Activated T-helper 1 cell treated with anti-CD3 and anti-CD28 coated beads, Interleukin-12 subunit alpha, Interleukin-12 subunit beta, Interleukin-2, Interleukin-4 antibody, amounts not matched to agents 30 ng/mL and 10 ng/mL and 1 ng/mL, durations not matched to agents 14 hours and 24 hours and 36 hours (primary cell): ENCODE measurements at regions of chr20 and their contacts with region 1.

Region 1: GRCh38 chr20:25407311-25408169 is at the start of gene GINS1:
- DNase-seq: peak; percentile 85
- H3K4me3 Mint-ChIP-seq: peak within 1 kb of the TSS; percentile 86
- H3K27ac Mint-ChIP-seq: peak within 1 kb of the TSS; percentile 87
- H3K4me1 Mint-ChIP-seq: peaks cover 27% of the 10 kb centered on the region
- H3K27me3 Mint-ChIP-seq: no peaks in the 10 kb centered on the region
- total RNA-seq, gene GINS1: 39.6 and 40.1 TPM in 2 replicates

Region 2: DNA sequence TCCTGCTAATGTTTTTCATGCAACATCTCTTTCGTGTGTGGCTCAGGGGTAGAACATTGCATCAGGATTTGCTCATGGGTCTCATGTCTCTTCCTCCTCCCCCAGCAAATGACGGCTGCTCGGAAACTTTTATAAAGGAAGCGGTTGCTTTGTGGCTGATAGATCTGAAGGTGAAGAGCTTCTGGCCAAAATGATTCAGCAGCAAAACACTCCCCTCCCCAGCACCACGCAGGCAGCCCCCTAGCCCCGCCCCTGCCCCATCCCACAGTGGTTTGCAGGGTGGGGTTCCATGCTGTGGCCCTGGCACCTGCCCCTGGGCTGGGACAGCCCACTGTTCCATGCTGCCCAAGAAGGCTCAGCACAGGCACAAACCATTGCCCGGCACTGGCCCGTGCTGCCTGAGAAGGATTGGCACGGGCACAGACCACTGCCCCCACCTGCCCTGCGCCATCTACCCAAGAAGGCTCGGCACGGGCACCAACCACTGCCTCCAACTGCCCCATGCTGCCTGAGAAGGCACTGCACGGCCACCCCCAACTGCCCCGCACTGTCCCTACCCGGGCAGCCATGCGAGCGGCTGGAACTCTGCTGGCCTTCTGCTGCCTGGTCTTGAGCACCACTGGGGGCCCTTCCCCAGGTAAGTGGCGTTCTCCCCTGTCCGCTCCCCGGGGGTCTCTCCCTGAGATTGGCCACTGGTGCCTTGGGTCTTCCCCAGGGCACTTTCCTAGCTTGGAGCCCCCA is 458.4 kb before region 1 on chr20 and contains the start of gene CST7:
- intact Hi-C with region 1: loop called (anchors 5 kb)
- DNase-seq: peak; percentile 81
- H3K4me3 Mint-ChIP-seq: peak within 1 kb of the TSS; percentile 90
- H3K27ac Mint-ChIP-seq: peak within 1 kb of the TSS; percentile 99
- H3K4me1 Mint-ChIP-seq: peaks cover 74% of the 10 kb centered on the region
- H3K27me3 Mint-ChIP-seq: no peaks in the 10 kb centered on the region
- total RNA-seq, gene CST7: 127 and 133 TPM in 2 replicates

Region 3: DNA sequence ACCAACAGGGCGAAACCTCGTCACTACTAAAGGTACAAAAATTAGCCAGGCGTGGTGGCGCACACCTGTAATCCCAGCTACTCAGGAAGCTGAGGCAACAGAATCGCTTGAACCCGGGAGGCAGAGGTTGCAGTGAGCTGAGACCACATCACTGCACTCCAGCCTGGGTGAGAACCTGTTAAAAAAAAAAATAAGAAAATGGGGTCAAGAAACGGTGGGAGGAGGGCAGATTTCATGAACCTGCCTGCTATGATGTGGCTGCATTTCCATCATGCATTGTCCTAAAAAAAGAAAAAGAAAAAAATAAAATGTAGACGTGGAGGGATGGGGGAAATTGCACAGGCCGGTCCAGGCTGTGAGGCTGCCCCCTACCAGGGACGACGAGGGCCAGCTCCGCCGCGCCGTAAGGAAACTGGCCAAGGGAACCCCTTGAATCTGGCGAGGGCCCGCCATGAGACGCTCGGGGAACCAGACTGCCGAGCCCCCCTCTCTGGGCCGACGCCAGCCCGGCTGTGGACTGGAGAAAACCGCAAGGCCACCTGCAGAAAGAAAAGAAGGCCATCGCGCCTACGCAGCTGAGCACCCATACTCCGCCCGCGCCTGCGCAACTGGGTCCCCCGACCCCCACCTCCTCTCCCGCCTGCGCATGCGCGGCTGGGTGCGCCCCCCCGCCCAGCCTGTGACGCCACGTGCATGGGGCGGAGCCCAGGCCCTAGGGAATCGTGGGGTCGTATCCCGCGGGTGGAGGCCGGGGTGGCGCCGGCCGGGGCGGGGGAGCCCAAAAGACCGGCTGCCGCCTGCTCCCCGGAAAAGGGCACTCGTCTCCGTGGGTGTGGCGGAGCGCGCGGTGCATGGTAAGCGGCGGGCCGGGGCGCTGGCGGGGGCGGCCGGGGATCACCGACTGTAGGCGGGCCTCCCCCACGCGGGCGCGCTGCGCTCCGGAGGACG is 212.3 kb before region 1 on chr20 and contains the start of gene ENTPD6:
- intact Hi-C with region 1: loop called (anchors 1 kb)
- DNase-seq: peak; percentile 89
- H3K4me3 Mint-ChIP-seq: peak within 1 kb of the TSS; percentile 91
- H3K27ac Mint-ChIP-seq: peak within 1 kb of the TSS; percentile 81
- H3K4me1 Mint-ChIP-seq: peaks cover 20% of the 10 kb centered on the region
- H3K27me3 Mint-ChIP-seq: no peaks in the 10 kb centered on the region
- total RNA-seq, gene ENTPD6: 42.5 and 43.5 TPM in 2 replicates

Region 4: DNA sequence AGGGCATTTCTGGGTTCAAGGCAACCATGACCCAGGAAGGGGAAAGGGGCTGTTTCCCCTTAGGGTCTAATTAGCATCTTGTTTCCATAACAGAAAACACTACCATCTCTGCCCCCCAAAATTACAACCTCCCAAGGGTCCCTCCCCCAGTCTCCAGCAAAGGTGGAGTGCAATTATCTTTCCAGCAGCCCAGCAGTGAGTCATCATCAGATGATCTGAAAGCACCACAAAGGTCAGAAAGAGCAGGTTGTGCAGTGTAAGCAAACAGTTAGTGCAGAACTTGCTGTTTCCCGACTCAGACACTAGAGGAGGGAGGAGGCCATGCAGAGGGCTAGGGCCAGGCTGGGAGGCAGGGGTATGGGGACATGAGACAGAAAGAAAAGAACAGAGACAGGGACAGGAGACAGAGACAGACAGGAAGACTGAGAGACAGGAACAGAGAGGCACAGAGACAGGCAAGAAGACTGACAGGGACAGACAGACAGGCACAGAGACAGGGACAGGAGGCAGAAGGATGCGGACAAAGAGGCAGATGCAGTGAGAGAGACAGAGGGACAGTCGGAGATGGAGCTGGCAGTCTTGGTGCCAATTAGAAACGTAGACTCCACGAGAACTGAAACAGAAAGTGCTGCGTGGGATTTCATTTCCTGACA is 97.1 kb before region 1 on chr20:
- intact Hi-C with region 1: loop called (anchors 1 kb)
- DNase-seq: peak; percentile 61
- H3K4me3 Mint-ChIP-seq: peak overlapping the region; percentile 81
- H3K27ac Mint-ChIP-seq: peak overlapping the region; percentile 98
- H3K4me1 Mint-ChIP-seq: peaks cover 46% of the 10 kb centered on the region
- H3K27me3 Mint-ChIP-seq: no peaks in the 10 kb centered on the region

Region 5: DNA sequence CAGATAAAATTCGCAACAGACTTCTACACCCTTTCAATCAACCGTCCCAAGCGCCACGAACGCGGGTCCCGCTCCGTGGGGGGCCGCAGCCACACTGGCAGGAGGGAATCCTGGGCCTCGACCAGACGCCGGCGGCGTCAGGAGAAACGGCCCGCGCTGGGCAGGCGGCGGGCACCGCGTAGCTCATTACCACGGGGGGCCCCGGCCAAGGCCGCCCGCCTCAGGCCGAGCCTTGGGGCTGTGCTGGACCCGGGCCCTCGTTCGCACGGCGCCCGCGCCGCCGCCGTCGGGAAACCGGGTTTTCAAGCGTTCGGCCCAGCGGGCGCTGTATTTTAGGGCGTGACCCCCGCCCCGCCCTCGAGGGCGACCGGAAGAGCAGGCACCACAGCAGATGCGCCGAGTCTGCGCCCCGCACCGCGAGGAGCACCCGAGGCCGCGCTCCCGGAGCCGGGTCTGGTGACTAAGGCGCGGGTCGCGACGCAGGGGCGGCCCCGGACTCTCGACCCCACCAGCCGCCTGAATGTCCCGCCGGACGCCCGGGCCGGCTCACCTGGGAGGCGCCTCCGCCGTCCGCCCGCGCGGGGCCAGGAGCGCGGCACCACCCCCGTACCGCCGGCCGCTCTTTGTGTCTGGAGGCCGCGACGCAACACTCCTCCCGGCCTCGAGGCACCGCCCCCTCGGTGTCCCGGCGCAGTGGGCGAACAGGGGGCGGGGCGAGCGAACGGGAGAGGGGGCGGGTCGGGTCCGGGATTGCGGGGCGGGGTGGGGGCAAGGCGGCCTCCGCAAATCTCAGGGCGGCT is 177.6 kb after region 1 on chr20 and contains the start of gene NINL:
- intact Hi-C with region 1: loop called (anchors 10 kb)
- DNase-seq: peak; percentile 50
- H3K4me3 Mint-ChIP-seq: peak within 1 kb of the TSS; percentile 84
- H3K27ac Mint-ChIP-seq: peak within 1 kb of the TSS; percentile 64
- H3K4me1 Mint-ChIP-seq: peaks cover 12% of the 10 kb centered on the region
- H3K27me3 Mint-ChIP-seq: peaks cover 8% of the 10 kb centered on the region
- total RNA-seq, gene NINL: 2.0 and 2.5 TPM in 2 replicates

Region 6: GRCh38 chr20:25696384-25697131 is 289.0 kb after region 1 on chr20 and contains the start of gene ZNF337:
- intact Hi-C with region 1: loop called (anchors 5 kb)
- DNase-seq: peak; percentile 93
- H3K4me3 Mint-ChIP-seq: peak within 1 kb of the TSS; percentile 91
- H3K27ac Mint-ChIP-seq: peak within 1 kb of the TSS; percentile 93
- H3K4me1 Mint-ChIP-seq: peaks cover 33% of the 10 kb centered on the region
- H3K27me3 Mint-ChIP-seq: peaks cover 2% of the 10 kb centered on the region
- total RNA-seq, gene ZNF337: 13.9 and 14.6 TPM in 2 replicates